Right ventricle myocardium inferior (tissue), 1 donor: ENCODE measurements at regions of chr17 and their contacts with region 1.

Region 1: GRCh38 chr17:48541577-48542113 is 3.3 kb downstream of the HOXB2 start:
- DNase-seq: peak; percentile 85
- ATAC-seq: peak; percentile 81

Region 2: DNA sequence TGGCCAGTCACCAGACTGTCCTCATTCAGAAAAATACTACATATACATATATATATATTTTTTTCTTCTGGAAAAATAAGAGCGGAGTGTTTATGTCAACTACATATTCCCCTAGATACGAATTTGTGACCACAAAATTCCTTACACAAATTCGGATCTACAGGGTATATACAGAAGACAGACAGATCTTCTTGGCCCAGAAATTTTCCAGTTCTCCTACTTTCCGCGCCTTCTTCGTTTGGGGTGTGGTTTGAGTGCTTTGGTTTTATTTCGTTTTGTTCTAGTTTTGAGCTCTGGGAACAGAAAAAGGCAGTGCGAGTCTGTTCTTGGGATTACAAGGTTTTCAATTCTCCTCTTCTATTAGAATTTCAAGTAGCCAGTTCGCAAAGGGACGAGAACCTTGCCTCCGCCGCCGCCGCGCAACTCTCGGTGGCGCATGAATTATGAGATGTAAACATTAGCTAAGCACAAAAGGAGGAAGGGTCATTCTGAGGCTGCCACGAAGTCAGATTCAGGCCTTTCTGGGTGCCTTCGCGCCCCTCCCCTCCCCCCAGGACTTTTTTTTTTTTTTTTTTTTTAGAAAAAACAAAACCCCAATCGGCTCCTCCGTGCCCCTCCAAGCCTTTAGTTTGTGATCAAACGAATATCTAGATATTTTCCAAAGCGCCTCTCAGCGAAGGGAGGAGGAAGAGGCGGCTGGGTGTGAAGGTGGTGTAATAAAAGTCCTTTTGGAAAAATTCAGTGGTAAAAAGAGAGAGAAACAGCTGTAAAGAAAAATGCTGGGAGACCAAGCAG is 38.3 kb after region 1 on chr17:
- intact Hi-C with region 1: loop called (anchors 1 kb)
- DNase-seq: no peak
- ATAC-seq: no peak